ENCODE measurements at regions of chr13 and their contacts with region 1.

Region 1: DNA sequence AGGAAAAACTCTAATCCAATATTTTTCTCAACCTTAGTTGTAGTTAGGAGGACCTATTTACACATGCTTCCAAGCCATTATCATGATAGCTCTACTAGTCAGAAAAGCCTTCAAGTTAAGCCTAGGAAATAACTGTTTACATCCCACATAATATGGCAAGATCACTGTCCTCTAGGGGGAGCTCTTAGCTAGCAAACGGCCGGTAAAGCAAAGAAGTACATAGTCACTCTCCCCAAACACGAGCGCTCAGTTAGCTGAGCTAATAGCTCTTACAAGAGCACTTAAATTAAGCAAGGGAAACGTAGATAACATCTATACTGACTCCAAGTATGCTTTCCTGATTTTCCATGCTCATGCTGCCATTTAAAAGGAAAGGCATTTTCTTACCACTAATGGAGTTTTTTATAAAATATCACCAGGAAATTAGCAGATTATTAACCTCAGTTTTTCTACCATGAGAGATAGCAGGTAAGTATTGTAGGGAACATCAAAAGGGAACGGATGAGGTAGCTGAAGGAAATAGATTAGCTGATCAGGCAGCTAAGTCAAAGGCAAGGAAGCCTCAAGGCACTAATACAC is 100.6 kb upstream of the PABPC3 start:
- DNase-seq: peak in 8 of 9 donors; percentile 23 to 67 (median 56)
- ATAC-seq: peak; percentile 75
- H3K4me3 ChIP-seq: no peak overlapping the region
- H3K4me3 Mint-ChIP-seq: peak overlapping the region in 2 of 10 donors; percentile 0 to 24
- H3K27ac ChIP-seq: no peak overlapping the region
- H3K27ac Mint-ChIP-seq: peak overlapping the region in 1 of 9 donors; percentile 18
- H3K4me1 ChIP-seq: no peaks in the 10 kb centered on the region
- H3K4me1 Mint-ChIP-seq: peaks cover 0 to 6% (median 5%) of the 10 kb centered on the region in 7 donors
- H3K27me3 ChIP-seq: no peaks in the 10 kb centered on the region
- H3K27me3 Mint-ChIP-seq: peaks cover 26 to 44% (median 29%) of the 10 kb centered on the region in 5 donors

Region 2: GRCh38 chr13:24574847-24575246 is 420.5 kb before region 1 on chr13:
- CTCF ChIA-PET with region 1: no interaction called
- POLR2A ChIA-PET with region 1: no interaction called
- intact Hi-C with region 1: loop called in 1 of 2 experiments (anchors 2 kb)
- DNase-seq: no peak
- ATAC-seq: no peak
- H3K4me3 ChIP-seq: no peak overlapping the region
- H3K4me3 Mint-ChIP-seq: no peak overlapping the region
- H3K27ac ChIP-seq: no peak overlapping the region
- H3K27ac Mint-ChIP-seq: no peak overlapping the region
- H3K4me1 ChIP-seq: no peaks in the 10 kb centered on the region
- H3K4me1 Mint-ChIP-seq: peaks cover 0 to 3% (median 0%) of the 10 kb centered on the region in 7 donors
- H3K27me3 ChIP-seq: no peaks in the 10 kb centered on the region
- H3K27me3 Mint-ChIP-seq: peaks cover 7 to 18% (median 12%) of the 10 kb centered on the region in 5 donors

Region 3: DNA sequence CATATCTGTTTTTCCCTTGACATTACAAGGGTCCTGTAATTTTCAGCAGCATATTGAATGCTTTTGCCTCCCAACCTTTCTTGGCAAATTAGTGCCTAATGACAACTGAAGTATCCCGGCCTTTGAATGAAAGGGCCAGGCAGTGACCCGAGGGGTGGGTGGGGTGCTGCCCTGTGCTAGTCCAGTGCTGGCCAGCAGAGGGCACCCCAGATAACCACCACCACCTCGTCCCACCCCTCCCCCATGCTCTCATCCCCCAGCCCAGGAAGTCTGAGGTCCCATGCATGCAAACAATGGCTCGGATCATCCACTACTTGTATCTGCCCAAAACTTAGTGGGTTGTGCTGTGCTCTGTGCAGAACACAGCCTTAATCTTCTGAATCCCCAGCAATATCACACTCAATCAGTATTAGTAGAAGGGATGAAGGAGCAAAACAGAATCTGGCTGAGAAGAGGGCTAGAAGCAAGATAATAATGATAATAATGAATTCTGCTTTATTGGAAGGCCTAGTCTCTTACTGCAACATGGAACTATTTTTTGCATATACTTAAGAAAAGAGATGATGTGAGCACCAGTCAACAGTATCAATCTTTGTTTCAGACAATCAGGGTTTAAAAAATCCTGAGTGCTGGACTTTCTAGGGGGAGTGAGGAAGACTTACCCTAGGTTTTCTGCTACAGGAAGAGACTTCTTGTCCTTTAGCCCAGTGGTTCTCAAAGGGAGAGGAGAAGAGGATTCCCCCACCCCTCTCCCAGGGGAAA is 311.3 kb before region 1 on chr13:
- CTCF ChIA-PET with region 1: no interaction called
- POLR2A ChIA-PET with region 1: no interaction called
- intact Hi-C with region 1: loop called in 1 of 2 experiments (anchors 5 kb)
- DNase-seq: peak; percentile 28 to 63 (median 55)
- ATAC-seq: peak; percentile 88
- H3K4me3 ChIP-seq: no peak overlapping the region
- H3K4me3 Mint-ChIP-seq: peak overlapping the region; percentile 5 to 64 (median 39)
- H3K27ac ChIP-seq: no peak overlapping the region
- H3K27ac Mint-ChIP-seq: peak overlapping the region in 7 of 9 donors; percentile 0 to 87 (median 37)
- H3K4me1 ChIP-seq: peaks cover 15 to 30% of the 10 kb centered on the region in 2 donors
- H3K4me1 Mint-ChIP-seq: peaks cover 22 to 43% (median 30%) of the 10 kb centered on the region in 7 donors
- H3K27me3 ChIP-seq: peaks cover 4 to 10% of the 10 kb centered on the region in 2 donors
- H3K27me3 Mint-ChIP-seq: peaks cover 22 to 58% (median 33%) of the 10 kb centered on the region in 5 donors

Region 4: DNA sequence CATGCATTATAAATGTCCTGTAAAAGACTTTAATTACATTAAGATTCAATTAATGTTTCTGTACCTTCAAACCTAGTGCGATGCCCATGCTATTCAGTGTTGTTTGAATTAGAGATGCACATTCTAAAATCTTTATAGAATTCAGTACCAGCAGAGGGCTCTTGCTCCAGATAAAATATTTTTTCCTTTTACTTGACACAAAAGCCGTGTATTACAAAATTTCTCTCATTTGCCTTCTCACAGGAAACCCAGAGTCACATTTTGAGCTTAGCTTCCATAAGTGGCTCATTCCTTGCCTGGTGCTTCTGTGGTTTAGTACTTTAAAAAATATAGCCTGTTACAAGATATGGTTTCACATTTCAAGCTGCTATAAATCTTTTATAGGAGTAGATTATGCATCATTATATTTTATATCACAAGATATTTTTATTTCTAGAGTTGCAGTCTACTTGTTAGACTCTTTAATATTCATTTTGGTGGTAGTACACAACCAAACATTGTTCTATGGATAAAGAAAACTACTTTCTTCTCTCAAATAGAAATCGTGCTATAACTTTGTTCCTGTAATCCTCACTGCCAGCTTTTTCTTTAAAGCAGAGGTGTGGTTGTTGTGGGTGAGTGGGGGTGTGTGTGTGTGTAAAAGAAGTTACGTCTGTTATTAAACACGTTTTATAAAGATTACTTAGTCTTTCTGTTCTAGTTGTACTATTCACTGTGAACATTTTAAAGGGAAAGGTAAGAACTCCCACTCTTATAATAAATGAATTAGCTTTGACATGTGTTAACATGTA is 130.0 kb before region 1 on chr13:
- CTCF ChIA-PET with region 1: no interaction called
- POLR2A ChIA-PET with region 1: no interaction called
- intact Hi-C with region 1: loop called in 1 of 2 experiments (anchors 1 kb)
- DNase-seq: no peak
- ATAC-seq: no peak
- H3K4me3 ChIP-seq: no peak overlapping the region
- H3K4me3 Mint-ChIP-seq: no peak overlapping the region
- H3K27ac ChIP-seq: no peak overlapping the region
- H3K27ac Mint-ChIP-seq: no peak overlapping the region
- H3K4me1 ChIP-seq: no peaks in the 10 kb centered on the region
- H3K4me1 Mint-ChIP-seq: peaks cover 0 to 10% (median 0%) of the 10 kb centered on the region in 7 donors
- H3K27me3 ChIP-seq: no peaks in the 10 kb centered on the region
- H3K27me3 Mint-ChIP-seq: peaks cover 10 to 32% (median 11%) of the 10 kb centered on the region in 5 donors

Region 5: GRCh38 chr13:25037057-25037813 is 41.9 kb after region 1 on chr13:
- CTCF ChIA-PET with region 1: interaction called, 4 read pairs
- POLR2A ChIA-PET with region 1: no interaction called
- intact Hi-C with region 1: loop called (anchors 1 kb)
- DNase-seq: peak in 6 of 9 donors; percentile 6 to 53 (median 36)
- ATAC-seq: peak; percentile 70
- H3K4me3 ChIP-seq: no peak overlapping the region
- H3K4me3 Mint-ChIP-seq: no peak overlapping the region
- H3K27ac ChIP-seq: no peak overlapping the region
- H3K27ac Mint-ChIP-seq: no peak overlapping the region
- H3K4me1 ChIP-seq: no peaks in the 10 kb centered on the region
- H3K4me1 Mint-ChIP-seq: no peaks in the 10 kb centered on the region
- H3K27me3 ChIP-seq: no peaks in the 10 kb centered on the region
- H3K27me3 Mint-ChIP-seq: peaks cover 37 to 64% (median 50%) of the 10 kb centered on the region in 5 donors

Region 6: DNA sequence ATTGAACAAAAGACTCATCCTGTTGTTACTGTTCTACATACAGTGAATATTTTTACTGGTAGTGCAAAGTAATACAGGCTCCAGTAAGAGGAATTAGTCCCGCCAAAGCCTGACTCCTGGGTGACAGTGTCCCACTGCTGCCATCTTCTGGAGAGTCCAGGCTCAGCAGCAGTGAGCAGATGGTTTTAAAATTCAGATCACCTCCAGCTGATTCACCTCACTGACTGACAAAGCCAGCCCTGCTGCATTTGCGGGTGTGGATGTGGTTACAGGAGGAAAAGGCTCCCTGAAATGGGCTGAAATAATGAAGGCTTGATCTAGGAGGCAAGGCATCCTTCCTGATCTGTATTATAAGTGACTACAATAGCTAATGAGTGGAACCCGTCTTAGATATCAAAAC is 118.9 kb after region 1 on chr13:
- CTCF ChIA-PET with region 1: interaction called, 4 read pairs
- POLR2A ChIA-PET with region 1: no interaction called
- intact Hi-C with region 1: loop called (anchors 1 to 5 kb)
- DNase-seq: peak in 8 of 9 donors; percentile 12 to 59 (median 27)
- ATAC-seq: peak; percentile 77
- H3K4me3 ChIP-seq: no peak overlapping the region
- H3K4me3 Mint-ChIP-seq: no peak overlapping the region
- H3K27ac ChIP-seq: no peak overlapping the region
- H3K27ac Mint-ChIP-seq: no peak overlapping the region
- H3K4me1 ChIP-seq: no peaks in the 10 kb centered on the region
- H3K4me1 Mint-ChIP-seq: peaks cover 0 to 6% (median 0%) of the 10 kb centered on the region in 7 donors
- H3K27me3 ChIP-seq: no peaks in the 10 kb centered on the region
- H3K27me3 Mint-ChIP-seq: peaks cover 25 to 50% (median 37%) of the 10 kb centered on the region in 5 donors

Region 7: DNA sequence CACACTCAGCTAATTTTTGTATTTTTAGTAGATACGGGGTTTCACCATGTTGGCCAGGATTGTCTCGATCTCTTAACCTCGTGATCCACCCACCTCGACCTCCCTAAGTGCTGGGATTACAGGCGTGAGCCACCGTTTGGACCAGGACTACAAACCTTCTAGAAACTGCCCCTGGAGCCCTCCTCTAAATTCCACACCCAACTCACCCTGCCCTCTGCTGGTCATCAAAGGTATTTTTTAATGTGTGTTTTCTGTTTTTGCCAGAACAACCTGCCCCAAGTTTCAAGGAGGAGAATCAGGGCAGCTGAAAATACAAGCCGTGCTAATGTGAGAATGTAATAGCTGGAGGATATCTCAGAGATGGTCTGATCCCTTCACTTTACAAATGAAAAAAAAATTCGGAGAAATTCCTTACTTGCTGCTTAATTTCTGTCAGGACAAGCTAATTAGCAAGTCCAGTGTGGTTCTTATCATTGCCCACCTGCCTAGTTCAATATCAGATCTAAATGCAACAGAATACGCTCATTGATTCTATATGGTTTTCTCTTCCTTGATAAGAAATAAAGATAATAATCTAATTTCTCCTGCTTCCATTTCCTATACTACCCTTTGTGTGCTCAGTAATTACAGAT is 380.5 kb after region 1 on chr13:
- CTCF ChIA-PET with region 1: no interaction called
- POLR2A ChIA-PET with region 1: no interaction called
- intact Hi-C with region 1: loop called in 1 of 2 experiments (anchors 1 kb)
- DNase-seq: peak in 8 of 9 donors; percentile 8 to 50 (median 30)
- ATAC-seq: peak; percentile 57
- H3K4me3 ChIP-seq: no peak overlapping the region
- H3K4me3 Mint-ChIP-seq: peak overlapping the region in 1 of 10 donors; percentile 35
- H3K27ac ChIP-seq: no peak overlapping the region
- H3K27ac Mint-ChIP-seq: no peak overlapping the region
- H3K4me1 ChIP-seq: no peaks in the 10 kb centered on the region
- H3K4me1 Mint-ChIP-seq: peaks cover 5 to 18% (median 13%) of the 10 kb centered on the region in 7 donors
- H3K27me3 ChIP-seq: peaks cover 0 to 3% of the 10 kb centered on the region in 2 donors
- H3K27me3 Mint-ChIP-seq: peaks cover 51 to 62% (median 57%) of the 10 kb centered on the region in 5 donors